Endothelial cell of umbilical vein (primary cell): ENCODE measurements at regions of chr7 and their contacts with region 1.

Region 1: GRCh38 chr7:107995184-107996071 is 7.5 kb downstream of the LAMB1 start:
- DNase-seq: peak; percentile 99
- H3K4me3 ChIP-seq: peak overlapping the region in 1 of 3 experiments; percentile 30
- H3K27ac ChIP-seq: peak overlapping the region; percentile 99
- H3K4me1 ChIP-seq: peaks cover 72% of the 10 kb centered on the region
- H3K27me3 ChIP-seq: no peaks in the 10 kb centered on the region
- CTCF ChIP-seq: no peak
- POLR2A ChIP-seq: peak; percentile 55

Region 2: DNA sequence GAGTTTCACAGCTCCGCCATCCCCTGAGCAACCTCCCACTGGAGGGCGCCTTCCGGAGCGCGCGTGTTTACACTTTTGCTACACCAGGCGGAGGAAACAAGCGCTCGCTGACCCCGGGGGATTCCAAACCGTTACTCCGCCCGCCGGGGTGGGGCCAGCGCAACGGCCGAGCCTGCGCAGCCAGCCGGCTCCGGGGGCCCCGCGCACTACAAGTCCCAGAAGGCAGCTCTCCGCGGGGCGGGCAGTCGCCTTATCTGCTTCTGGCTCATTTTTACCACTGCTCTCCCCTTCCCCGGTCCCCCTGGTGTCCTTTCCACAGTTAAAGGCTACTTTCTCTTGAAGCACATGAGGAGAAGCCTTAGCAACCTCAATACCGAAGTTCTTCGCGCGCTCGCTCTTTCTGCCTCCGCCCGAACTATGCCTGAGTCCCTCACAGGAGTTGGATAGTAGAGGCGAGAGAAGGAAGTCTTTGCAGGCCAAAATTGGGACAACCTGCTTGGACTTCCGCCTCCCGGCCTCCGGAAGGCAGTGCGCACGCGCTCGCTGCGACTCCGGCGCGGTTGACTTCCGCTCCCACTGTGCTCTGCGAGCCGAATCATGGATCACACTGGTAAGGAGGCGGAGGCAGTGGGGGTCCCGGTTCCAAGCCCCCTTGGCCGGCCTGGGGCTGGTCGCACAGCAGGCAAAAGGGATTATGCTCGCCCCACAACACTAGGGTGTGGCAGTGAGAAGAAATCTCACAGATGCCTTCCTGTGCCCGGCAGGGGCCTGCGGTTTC is 251.7 kb before region 1 on chr7 and contains the start of gene CBLL1:
- CTCF ChIA-PET with region 1: no interaction called
- POLR2A ChIA-PET with region 1: no interaction called
- dilution Hi-C with region 1: no loop called
- intact Hi-C with region 1: loop called (anchors 10 kb)
- DNase-seq: peak; percentile 98
- H3K4me3 ChIP-seq: peak within 1 kb of the TSS; percentile 45 to 94 (median 79)
- H3K27ac ChIP-seq: peak within 1 kb of the TSS; percentile 96
- H3K4me1 ChIP-seq: peaks cover 38% of the 10 kb centered on the region
- H3K27me3 ChIP-seq: no peaks in the 10 kb centered on the region
- CTCF ChIP-seq: peak; percentile 65 to 76
- POLR2A ChIP-seq: peak; percentile 2
- total RNA-seq, gene CBLL1: 30.6 and 31.1 TPM in 2 replicates

Region 3: DNA sequence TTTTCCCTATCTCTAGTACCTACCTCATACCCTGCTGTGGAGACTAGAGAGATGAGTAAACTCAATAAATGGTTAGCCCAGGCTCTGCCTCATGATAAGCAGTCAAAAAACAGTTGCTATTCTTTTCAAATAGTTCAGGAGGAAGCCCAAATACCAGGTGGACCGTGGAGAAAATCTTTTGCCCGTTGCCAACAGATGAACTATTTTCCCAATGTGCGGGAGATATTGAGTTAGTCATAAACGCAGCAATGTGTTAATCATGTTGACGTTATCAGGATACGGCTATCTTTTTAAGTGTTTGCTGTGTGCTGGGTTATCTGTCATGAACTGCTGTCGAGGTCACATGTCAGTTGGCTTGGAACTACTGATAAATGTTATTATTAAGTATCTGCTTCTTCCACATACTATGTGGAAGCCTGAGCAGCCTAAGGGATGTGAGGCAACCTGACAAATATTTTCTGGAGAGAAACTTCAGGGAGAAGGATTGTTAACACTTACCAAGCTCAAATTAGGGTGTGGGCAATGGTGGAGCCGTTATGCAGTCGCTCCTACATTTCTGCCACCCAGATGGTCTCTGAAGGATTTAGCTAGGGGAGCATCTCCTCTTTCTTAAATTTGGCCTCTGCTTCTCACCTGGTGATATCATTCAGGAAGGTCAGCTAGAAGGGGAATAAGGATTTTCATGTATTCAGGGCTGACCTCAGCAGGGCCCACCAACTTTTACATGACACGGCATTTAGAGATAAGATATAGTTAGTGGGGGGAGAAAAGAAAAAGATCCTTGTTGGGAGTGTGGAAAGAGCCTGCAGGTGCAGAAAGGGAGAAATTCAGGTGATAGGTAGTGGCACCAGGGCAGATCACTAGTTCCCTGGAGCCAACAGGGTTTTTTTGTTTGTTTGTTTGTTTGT is 158.9 kb before region 1 on chr7:
- CTCF ChIA-PET with region 1: no interaction called
- POLR2A ChIA-PET with region 1: no interaction called
- dilution Hi-C with region 1: no loop called
- intact Hi-C with region 1: no loop called
- DNase-seq: peak; percentile 94
- H3K4me3 ChIP-seq: no peak overlapping the region
- H3K27ac ChIP-seq: no peak overlapping the region
- H3K4me1 ChIP-seq: peaks cover 5% of the 10 kb centered on the region
- H3K27me3 ChIP-seq: peaks cover 5 to 30% of the 10 kb centered on the region in 2 experiments
- CTCF ChIP-seq: no peak
- POLR2A ChIP-seq: peak; percentile 22

Region 4: DNA sequence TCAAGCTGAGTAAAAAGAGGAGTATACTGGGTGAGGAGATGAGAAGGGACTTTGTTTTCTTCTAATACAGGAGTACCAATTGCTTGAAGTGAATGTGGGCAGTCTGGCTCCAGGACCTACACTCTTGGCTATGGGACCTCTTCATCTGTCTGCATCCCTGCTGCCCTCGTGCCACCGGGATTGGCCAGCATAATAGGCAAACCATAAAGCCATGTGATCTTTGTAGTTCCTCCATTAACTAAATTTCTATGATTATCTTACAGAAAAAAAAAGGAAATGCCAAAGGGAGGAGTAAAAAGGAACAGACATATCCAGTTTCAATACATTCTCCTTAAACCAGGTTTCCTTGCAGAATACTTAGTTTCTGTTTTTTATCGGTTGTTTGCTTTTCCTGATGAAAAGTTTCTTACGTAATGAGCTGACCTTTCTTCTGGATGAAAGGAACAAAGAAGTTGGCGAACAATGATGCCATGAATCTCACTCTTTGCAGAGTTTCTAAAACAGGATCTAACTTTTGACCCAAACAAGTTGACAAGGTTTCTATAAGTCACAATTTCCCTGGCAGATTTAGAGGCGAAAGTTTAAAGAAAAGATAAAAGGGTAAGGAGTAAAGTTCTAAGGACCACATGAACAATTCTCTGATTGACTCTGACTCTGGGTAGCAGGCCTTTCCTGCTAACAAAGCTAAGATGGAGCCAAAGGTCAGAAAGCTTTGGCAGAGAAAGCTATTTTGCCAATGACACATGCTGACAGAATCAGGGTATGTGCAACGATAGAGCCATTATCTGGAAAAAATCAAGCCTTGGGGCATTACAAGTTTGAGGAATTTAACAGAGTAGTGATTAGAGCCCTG is 46.6 kb before region 1 on chr7:
- CTCF ChIA-PET with region 1: no interaction called
- POLR2A ChIA-PET with region 1: interaction called, 3 read pairs
- dilution Hi-C with region 1: no loop called
- intact Hi-C with region 1: loop called (anchors 1 kb)
- DNase-seq: peak; percentile 97
- H3K4me3 ChIP-seq: no peak overlapping the region
- H3K27ac ChIP-seq: peak overlapping the region; percentile 89
- H3K4me1 ChIP-seq: peaks cover 98% of the 10 kb centered on the region
- H3K27me3 ChIP-seq: no peaks in the 10 kb centered on the region
- CTCF ChIP-seq: no peak
- POLR2A ChIP-seq: peak; percentile 59